ENCODE measurements at regions of chr13 and their contacts with region 1.

Region 1: DNA sequence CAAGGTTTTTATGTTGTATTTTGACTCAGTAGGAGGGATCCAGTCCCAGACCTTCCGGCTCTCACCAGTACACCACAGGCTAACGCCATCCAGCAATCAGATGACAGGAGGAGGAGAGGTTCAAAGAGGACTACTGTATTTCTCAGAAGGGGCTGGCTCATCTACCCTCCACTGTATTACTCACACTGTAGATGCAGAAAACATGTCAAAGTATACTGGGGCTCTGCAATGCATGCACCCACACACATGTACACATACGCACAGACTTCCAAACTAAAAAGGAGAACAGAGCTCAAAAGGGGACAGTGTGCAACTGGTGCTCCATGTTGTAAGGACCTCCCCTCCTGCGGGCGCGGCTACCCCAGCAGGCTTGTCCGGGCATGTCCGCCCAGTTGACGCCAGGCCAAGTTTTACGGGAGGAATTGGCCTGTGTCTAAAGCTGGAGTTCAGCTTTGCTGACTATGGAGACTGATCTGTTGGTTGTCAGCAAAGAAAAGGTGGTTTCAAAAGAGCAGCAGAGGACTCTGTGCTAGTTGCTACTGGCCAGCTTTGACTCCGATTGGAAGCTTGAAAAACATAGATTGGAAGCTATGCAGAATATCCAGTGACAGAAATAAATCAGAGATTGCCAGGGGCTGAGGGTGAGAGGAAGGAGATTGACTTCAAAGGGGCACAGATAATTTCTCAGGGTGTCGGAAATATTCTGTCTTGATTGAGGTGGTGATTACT is 314.2 kb downstream of the DLEU7 start:
- DNase-seq: peak; percentile 92
- ATAC-seq: peak; percentile 82
- H3K4me3 ChIP-seq: no peak overlapping the region
- H3K27ac ChIP-seq: peak overlapping the region in 1 of 2 donors; percentile 4
- H3K4me1 ChIP-seq: peaks cover 0 to 4% of the 10 kb centered on the region in 2 donors
- H3K27me3 ChIP-seq: no peaks in the 10 kb centered on the region

Region 2: DNA sequence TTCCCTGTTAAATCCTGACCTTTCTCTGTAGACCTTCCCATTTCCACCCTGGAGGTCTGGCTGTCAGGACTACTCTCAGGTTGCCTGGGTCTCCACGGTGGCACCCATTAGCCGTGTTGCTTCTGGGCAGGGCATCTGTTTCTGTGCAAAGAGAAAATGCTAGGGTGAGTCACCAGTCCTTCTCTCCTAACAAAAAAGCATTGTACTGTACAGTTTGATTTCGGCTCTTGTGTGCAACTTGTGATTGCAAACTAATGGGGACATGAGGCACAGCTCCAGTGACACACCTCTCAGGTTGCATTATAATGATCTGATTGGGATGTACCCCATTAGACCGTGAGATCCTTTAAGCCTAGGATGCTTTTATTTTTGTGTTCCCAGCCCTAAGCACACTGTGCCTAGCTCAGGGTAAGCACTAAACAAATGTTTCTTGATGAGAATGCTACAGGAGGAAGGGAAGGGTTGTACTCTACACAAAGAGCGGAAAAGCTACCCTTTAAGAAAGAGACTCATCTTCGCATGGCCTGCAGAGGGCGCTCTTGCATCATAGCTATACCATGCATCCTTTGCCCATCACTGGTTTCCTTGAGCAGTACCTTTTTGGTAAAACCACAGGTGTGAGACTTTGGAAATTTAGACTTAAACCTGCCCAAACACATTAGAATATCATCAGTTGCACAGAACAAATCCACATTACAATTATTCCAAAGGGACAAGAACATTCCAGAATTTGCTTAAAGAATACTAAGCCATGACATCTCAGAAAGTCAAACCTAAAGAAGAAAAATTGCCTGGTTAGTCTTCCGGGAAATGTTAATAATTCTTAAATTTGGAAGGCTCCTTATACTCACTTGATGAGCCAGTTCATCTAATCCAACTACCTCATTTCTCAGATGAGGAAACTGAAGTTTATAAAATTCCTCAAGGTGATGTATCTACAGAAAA is 552.7 kb before region 1 on chr13:
- intact Hi-C with region 1: loop called (anchors 10 kb)
- DNase-seq: peak; percentile 73 to 89
- ATAC-seq: peak; percentile 87
- H3K4me3 ChIP-seq: no peak overlapping the region
- H3K27ac ChIP-seq: no peak overlapping the region
- H3K4me1 ChIP-seq: no peaks in the 10 kb centered on the region
- H3K27me3 ChIP-seq: no peaks in the 10 kb centered on the region

Region 3: GRCh38 chr13:49985129-49985528 is 544.2 kb before region 1 on chr13:
- intact Hi-C with region 1: loop called in 1 of 2 experiments (anchors 10 kb)
- DNase-seq: no peak
- ATAC-seq: no peak
- H3K4me3 ChIP-seq: no peak overlapping the region
- H3K27ac ChIP-seq: no peak overlapping the region
- H3K4me1 ChIP-seq: no peaks in the 10 kb centered on the region
- H3K27me3 ChIP-seq: no peaks in the 10 kb centered on the region

Region 4: GRCh38 chr13:50170447-50171037 is 358.8 kb before region 1 on chr13:
- intact Hi-C with region 1: loop called (anchors 5 kb)
- DNase-seq: no peak
- ATAC-seq: no peak
- H3K4me3 ChIP-seq: no peak overlapping the region
- H3K27ac ChIP-seq: no peak overlapping the region
- H3K4me1 ChIP-seq: no peaks in the 10 kb centered on the region
- H3K27me3 ChIP-seq: no peaks in the 10 kb centered on the region

Region 5: DNA sequence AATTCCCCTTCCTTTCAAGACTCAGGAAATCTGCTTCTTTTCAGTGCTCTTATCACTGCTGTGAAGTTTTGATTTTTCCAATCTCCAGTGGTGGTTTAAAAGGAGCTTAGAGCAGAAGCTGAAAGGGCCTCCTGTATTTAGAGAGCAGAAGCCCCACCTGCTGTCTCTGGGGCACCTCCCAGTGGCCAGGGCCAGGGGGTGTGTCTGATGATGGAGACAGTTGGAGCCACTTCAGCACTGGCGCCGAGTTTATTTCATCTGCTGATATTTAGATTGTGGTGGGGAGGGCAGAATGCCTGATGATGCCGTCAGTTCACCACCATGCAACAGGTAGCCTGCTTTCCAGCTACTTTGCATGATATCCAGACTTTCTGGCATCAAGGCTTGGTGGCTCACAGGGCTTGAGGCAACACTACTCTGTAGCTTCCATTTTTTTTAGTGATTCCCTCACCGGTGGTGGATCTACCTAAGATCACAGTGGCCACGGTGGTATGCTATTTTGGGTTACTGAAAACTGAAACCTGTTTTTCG is 142.2 kb before region 1 on chr13:
- intact Hi-C with region 1: no loop called
- DNase-seq: no peak
- ATAC-seq: peak; percentile 75
- H3K4me3 ChIP-seq: peak overlapping the region in 1 of 2 donors; percentile 59
- H3K27ac ChIP-seq: peak overlapping the region in 1 of 2 donors; percentile 83
- H3K4me1 ChIP-seq: peaks cover 0 to 4% of the 10 kb centered on the region in 2 donors
- H3K27me3 ChIP-seq: no peaks in the 10 kb centered on the region

Region 6: DNA sequence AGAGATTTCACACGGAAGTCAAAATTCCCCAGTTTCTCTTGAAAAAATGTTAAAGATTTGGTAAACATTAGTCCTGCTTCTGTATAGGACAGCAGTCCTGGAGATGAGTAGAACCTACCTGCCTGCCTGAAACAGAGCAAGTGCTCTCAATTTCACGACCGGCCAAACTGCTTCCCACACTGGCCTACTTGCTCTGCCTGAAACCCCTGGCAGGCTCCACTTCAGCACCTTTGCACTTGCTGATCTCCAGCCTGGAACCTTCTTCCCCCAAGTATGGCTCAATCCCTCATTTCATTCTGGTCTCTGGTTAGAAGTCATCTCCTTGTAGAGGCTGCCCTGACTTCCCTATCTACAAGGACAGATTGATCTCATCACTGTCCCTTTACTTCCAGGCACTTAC is 42.8 kb after region 1 on chr13:
- intact Hi-C with region 1: no loop called
- DNase-seq: no peak
- ATAC-seq: no peak
- H3K4me3 ChIP-seq: no peak overlapping the region
- H3K27ac ChIP-seq: no peak overlapping the region
- H3K4me1 ChIP-seq: peaks cover 3 to 7% of the 10 kb centered on the region in 2 donors
- H3K27me3 ChIP-seq: no peaks in the 10 kb centered on the region

Region 7: DNA sequence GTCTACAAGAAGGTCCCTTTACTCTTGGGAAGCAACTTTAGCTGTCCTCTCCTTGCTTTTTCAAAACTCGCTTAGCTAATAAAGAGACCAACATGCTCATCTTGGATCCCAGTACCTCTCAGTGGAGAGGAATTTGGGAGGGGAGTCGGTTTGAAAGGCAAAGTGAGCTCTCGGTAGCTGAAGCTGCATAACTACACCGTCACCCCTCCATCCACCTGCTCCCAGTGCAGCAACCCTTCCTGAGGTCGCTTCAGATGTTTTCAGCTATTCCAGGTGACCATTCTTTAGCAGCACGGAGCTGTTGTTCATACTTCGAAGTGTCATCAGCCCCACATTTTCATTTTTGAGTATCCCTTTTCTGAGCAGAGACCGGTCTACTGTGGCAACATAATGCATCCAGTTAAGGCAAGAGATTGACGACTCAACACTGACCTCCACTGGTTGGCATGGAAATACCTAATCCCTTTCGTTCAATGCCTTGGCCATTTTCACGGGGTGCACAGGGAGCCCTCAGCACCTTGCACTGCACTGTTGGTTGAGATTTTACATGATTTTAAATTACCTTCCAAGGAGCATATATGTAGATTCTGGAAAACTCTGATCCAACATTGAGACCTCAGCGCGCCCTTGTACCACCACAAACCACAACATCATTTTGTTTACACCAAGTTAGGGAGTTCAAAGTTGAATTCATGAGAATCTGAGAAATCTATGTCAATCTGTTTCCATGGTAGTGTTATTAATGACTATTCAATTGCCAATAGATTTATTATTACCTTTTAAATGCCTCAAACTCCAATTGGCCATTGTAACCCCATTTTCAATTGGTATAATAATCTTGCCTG is 272.0 kb after region 1 on chr13:
- intact Hi-C with region 1: loop called in 1 of 2 experiments (anchors 5 kb)
- DNase-seq: peak in 1 of 2 donors; percentile 55
- ATAC-seq: peak; percentile 92
- H3K4me3 ChIP-seq: no peak overlapping the region
- H3K27ac ChIP-seq: no peak overlapping the region
- H3K4me1 ChIP-seq: peaks cover 0 to 3% of the 10 kb centered on the region in 2 donors
- H3K27me3 ChIP-seq: no peaks in the 10 kb centered on the region

Region 8: GRCh38 chr13:50911937-50912795 is 382.8 kb after region 1 on chr13:
- intact Hi-C with region 1: loop called in 1 of 2 experiments (anchors 10 kb)
- DNase-seq: peak; percentile 93 to 95
- ATAC-seq: peak; percentile 67
- H3K4me3 ChIP-seq: no peak overlapping the region
- H3K27ac ChIP-seq: no peak overlapping the region
- H3K4me1 ChIP-seq: no peaks in the 10 kb centered on the region
- H3K27me3 ChIP-seq: no peaks in the 10 kb centered on the region

Region 9: DNA sequence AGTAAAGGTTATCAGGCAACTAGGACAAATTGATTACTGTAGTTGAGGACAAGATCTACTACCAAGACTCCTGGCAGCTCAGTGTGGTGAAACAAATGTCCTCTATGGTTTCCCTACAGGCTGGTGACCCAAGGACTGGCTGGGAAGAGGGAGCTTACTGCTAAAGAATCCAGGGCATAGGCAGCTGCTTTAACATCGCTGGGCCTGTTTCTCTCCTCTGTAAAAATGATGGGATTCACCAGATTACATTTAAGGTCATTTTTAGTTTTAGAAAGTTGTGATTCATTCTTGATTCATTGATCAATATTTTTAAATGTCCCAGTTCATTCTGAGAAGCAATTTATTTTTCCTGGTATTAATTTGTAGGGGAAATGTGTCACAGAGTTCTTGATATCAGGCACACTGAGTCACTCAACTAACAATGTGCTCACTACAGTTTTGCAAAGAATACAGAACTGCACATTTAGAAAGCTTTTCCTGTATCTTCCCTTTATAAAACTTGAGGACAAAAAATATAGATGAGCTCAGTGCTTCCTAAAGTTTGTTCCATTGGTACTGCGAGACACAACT is 673.2 kb after region 1 on chr13:
- intact Hi-C with region 1: no loop called
- DNase-seq: no peak
- ATAC-seq: no peak
- H3K4me3 ChIP-seq: no peak overlapping the region
- H3K27ac ChIP-seq: no peak overlapping the region
- H3K4me1 ChIP-seq: no peaks in the 10 kb centered on the region
- H3K27me3 ChIP-seq: no peaks in the 10 kb centered on the region

Measured in aorta (tissue), 5 donors.